Panc1 (cell line): ENCODE measurements at regions of chr17 and their contacts with region 1.

Region 1: DNA sequence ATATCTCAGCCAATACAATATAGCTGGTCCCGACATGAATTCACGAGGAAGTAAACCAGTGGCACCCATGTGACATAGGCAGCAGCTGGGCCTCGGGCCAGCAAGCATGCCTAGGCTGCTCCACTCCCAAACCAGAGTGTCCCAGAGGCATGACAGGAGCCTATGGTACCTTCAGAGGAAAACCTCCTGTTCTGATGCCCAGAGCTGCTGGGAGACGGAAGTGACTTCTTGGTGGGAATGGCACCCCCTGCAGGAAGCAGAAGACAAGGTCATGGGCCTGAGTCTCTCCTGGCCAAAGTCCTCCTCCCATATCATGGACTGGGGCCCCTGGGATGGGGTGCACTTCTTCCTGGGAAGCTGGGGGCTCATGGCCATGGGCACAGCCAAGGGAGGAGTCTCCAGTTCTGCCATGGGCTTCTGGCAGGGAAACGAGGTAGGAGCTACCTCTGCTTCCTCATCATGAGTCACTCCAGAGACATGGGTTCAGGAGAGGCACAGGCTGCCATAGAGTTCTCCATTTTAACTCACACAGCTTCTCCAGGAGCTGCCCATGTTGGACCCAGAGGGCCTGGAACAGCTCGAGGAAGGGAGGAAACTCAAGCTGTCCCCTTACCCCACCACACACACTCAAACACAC is 13.4 kb downstream of the FBF1 start:
- DNase-seq: no peak
- ATAC-seq: peak; percentile 75
- H3K4me3 ChIP-seq: no peak overlapping the region
- H3K27ac ChIP-seq: no peak overlapping the region
- H3K4me1 ChIP-seq: no peaks in the 10 kb centered on the region
- H3K27me3 ChIP-seq: no peaks in the 10 kb centered on the region
- CTCF ChIP-seq: no peak

Region 2: GRCh38 chr17:76138234-76138895 is 211.0 kb after region 1 on chr17:
- CTCF ChIA-PET with region 1: no interaction called
- POLR2A ChIA-PET with region 1: no interaction called
- in situ Hi-C with region 1: no loop called
- intact Hi-C with region 1: no loop called
- DNase-seq: no peak
- ATAC-seq: peak; percentile 59
- H3K4me3 ChIP-seq: no peak overlapping the region
- H3K27ac ChIP-seq: no peak overlapping the region
- H3K4me1 ChIP-seq: peaks cover 21% of the 10 kb centered on the region
- H3K27me3 ChIP-seq: no peaks in the 10 kb centered on the region
- CTCF ChIP-seq: no peak

Region 3: DNA sequence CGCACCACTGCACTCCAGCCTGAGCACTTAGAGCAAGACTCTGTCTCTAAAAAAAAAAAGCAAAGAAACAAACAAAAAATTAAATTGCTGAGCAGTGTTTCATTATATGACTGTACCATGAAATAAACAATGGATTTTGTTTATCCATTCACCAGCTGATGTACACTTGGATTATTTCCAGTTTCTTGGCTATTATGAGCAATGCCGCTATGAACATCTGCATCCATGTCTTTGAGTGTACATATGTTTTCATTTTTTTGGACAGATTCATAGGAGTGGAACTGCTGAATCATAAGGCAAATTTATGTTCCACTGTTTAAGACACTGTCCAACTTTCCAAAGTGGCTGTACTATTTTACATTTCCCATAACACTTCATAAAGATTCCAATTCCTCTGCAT is 304.9 kb after region 1 on chr17:
- CTCF ChIA-PET with region 1: interaction called, 16 read pairs
- POLR2A ChIA-PET with region 1: no interaction called
- in situ Hi-C with region 1: no loop called
- intact Hi-C with region 1: no loop called
- DNase-seq: peak; percentile 52
- ATAC-seq: no peak
- H3K4me3 ChIP-seq: no peak overlapping the region
- H3K27ac ChIP-seq: no peak overlapping the region
- H3K4me1 ChIP-seq: no peaks in the 10 kb centered on the region
- H3K27me3 ChIP-seq: no peaks in the 10 kb centered on the region; the same call in 1 of the 2 replicates
- CTCF ChIP-seq: no peak